ENCODE measurements at regions of chr9 and their contacts with region 1.

Region 1: GRCh38 chr9:137138722-137139467 is at the start of gene GRIN1:
- DNase-seq: peak in 1 of 2 experiments; percentile 77
- H3K4me3 ChIP-seq: peak within 1 kb of the TSS in 2 of 4 experiments; percentile 38 to 44; a peak in 4 of 8 replicates
- H3K27ac ChIP-seq: no peak within 1 kb of the TSS
- H3K4me1 ChIP-seq: peaks cover 0 to 14% (median 11%) of the 10 kb centered on the region in 4 experiments; a peak in 6 of 7 replicates
- H3K27me3 ChIP-seq: peaks cover 25 to 79% (median 72%) of the 10 kb centered on the region in 4 experiments
- CTCF ChIP-seq: no peak
- EP300 ChIP-seq: no peak
- POLR2A ChIP-seq: no peak
- RAD21 ChIP-seq: no peak
- total RNA-seq, gene GRIN1: 2.1 TPM in 2 replicates

Region 2: DNA sequence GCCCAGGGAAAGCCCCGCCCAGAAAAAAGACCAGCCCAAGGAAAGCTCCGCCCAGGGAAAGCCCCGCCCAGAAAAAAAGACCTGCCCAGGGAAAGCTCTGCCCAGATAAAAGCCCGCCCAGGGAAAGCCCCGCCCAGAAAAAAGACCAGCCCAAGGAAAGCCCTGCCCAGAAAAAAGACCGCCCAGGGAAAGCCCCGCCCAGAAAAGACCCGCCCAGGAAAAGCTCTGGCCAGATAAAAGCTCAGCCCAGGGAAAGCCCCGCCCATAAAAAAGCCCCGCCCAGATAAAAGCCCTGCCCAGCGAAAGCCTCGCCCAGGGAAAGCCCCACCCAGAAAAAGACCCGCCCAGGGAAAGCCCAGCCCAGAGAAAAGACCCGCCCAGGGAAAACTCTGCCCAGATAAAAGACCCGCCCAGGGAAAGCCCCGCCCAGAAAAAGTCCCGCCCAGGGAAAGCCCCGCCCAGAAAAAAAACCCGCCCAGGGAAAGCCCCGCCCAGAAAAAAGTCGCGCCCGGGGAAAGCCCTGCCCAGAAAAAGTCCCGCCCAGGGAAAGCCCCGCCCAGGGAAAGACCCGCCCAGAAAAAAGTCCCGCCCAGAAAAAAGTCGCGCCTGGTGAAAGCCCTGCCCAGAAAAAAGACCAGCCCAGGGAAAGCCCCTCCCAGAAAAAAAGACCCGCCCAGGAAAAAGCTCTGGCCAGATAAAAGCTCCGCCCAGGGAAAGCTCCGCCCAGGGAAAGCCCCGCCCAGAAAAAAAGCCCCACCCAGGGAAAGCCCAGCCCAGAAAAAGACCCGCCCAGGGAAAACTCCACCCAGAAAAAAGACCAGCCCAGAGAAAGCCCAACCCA is 11.9 kb after region 1 on chr9:
- CTCF ChIA-PET with region 1: interaction called, 24 read pairs
- POLR2A ChIA-PET with region 1: interaction called, 7 read pairs
- DNase-seq: peak in 1 of 2 experiments; percentile 73
- H3K4me3 ChIP-seq: no peak overlapping the region
- H3K27ac ChIP-seq: no peak overlapping the region
- H3K4me1 ChIP-seq: peaks cover 0 to 9% (median 0%) of the 10 kb centered on the region in 4 experiments; a peak in 1 of 7 replicates
- H3K27me3 ChIP-seq: peaks cover 3 to 13% (median 12%) of the 10 kb centered on the region in 4 experiments; a peak in 6 of 7 replicates
- CTCF ChIP-seq: no peak
- EP300 ChIP-seq: no peak
- POLR2A ChIP-seq: no peak
- RAD21 ChIP-seq: no peak

Measured in H1 (cell line).